ENCODE measurements at regions of chr18 and their contacts with region 1.

Region 1: DNA sequence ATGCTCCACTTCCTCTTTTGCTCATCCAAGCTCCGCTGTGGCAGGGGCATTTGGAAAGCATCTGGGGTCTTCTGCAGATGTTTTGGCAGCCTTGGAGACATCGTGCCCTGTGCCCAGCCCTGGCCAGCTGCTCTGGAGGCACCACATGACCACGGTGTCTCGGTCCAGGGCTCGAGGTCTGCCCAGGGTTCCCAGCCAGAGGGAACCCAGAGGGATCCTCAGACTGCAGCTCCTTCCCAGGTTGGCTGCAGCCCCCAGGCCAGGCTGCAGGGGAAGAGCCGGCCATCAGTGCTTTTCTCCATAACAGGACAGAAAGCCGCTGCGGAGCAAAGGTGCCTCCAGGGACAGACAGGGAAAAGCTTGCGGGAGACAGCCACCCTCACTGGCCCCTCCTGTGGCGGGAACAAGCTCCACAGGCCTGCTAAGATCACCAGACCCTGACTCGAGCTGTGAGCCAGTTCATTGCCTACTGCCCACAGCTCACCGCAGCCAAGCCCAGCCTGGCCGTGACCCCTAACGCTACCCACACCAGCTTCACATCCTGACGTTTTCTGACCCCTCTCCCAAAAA is 74.7 kb downstream of the SMAD7 start:
- DNase-seq: no peak
- H3K4me3 ChIP-seq: no peak overlapping the region
- H3K27ac ChIP-seq: no peak overlapping the region
- H3K4me1 ChIP-seq: peaks cover 13% of the 10 kb centered on the region
- H3K27me3 ChIP-seq: no peaks in the 10 kb centered on the region
- CTCF ChIP-seq: no peak

Region 2: DNA sequence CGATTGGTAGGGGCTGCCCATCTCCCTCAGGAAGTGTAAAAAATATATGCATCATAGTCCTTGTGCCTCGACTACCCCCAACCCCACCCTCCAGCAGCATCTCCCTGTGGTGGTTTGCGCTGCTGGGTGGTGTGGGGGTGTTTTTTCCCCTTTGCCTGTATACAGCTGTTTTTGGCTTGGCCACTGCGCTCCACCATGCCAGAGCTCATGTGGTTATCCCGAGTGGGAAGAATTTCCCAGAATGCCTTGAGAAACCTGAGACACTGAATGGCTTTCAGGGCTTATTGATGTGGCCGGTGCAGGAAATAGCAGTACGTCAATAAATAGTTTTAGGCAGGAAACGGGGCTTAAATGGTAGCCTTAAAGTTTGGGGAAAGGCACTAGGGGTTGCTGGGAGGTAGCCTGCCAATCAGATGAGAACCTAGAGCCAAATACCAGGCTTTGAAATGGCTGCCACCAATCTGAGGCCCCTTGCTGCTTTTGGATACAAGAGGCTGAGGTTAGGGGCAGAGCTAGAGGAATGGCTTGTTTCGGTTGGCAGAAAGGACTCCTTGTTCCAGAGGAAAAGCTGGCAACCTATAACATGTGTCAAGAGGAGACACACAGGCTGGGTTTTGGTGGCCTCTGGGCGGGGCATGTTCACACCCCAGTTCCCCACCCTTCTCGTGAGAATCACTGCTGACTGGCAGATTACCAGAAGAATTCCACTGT is 69.3 kb before region 1 on chr18:
- CTCF ChIA-PET with region 1: no interaction called
- dilution Hi-C with region 1: no loop called
- in situ Hi-C with region 1: no loop called
- intact Hi-C with region 1: no loop called
- DNase-seq: no peak
- H3K4me3 ChIP-seq: no peak overlapping the region
- H3K27ac ChIP-seq: no peak overlapping the region
- H3K4me1 ChIP-seq: peaks cover 6% of the 10 kb centered on the region
- H3K27me3 ChIP-seq: no peaks in the 10 kb centered on the region
- CTCF ChIP-seq: no peak

Region 3: DNA sequence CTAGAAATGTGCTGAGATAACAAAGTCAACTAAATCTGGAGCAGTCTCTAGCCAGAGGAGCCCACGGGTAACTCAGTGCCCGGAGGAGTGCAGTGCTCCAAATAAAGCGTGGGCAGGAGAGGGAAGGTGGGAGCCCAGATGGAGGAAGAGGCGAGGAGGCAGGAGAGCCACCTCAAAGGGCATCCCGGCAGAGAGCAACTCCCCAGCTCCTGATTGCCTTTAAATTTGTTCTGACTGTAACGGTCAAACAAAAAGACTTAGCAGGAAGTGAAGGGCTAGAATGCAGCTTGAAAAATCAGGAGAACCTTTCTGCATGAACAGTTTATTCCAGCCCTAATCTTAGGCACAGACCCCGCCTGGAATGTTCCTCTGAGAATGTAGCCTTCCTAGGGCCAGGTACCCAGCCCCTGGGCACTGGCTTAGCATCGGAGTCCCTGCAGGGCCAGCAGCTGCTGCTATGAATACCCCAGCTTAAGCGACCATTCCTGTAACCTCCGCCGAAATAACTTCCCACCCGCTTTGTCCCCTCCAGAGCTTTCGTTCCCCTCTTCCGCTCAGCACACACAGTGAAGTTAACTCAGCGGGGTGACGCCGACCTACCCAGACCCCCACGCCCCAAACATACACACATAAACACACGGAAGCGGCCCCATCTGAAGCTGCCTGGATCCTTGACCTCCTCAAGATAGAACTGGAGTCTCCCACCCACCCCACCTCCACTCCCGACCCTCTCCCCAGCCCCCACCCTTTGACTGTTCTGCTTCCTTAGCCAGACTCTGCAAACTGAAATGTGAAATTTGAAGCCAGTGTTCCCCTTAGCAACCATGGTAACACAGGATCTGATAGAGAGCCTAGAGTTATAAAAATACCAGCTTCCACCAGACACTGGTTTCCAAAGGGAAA is 48.5 kb before region 1 on chr18:
- CTCF ChIA-PET with region 1: no interaction called
- dilution Hi-C with region 1: loop called (anchors 5 kb)
- in situ Hi-C with region 1: no loop called
- intact Hi-C with region 1: no loop called
- DNase-seq: no peak
- H3K4me3 ChIP-seq: no peak overlapping the region
- H3K27ac ChIP-seq: no peak overlapping the region
- H3K4me1 ChIP-seq: peaks cover 17% of the 10 kb centered on the region
- H3K27me3 ChIP-seq: no peaks in the 10 kb centered on the region
- CTCF ChIP-seq: no peak

Region 4: DNA sequence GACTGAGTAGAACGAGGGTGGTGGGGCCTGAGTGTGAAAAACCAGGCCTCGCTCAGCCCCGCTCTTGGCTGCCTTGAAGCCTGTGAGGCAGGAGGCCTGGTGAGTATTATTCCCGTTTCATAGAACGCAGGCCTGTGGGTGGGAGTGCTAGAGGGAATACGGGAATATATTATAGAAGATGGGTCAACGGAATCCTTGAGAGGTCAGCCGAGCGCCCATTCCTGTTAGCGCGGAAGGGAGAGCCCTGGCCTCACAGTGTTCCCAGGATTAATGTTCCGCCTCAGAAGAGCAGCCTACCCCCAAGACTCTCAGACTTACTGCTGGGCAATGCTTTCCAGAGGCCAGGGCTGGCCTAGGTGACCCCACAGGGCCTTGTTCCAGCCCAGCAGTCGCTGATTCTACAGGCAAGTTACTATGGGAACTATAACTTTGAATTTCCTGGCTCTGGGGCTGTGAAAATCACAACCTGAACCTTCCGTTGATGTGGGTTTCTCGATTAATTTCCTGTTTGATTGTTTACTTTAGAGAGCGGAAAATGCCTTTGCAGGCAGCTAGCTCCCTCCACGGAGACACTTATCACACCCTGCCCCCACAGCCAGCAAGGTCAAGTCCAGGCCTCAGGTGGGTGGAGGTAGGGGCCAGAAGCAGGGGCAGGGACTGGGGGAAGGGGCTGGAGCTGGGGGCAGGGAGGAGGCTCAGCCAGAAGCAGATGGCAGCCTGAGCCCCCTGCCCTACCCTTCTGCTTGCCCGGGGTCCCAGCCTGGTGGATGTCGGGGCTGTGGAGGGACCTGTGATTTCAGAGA is 33.6 kb before region 1 on chr18:
- CTCF ChIA-PET with region 1: no interaction called
- dilution Hi-C with region 1: no loop called
- in situ Hi-C with region 1: no loop called
- intact Hi-C with region 1: no loop called
- DNase-seq: no peak
- H3K4me3 ChIP-seq: no peak overlapping the region
- H3K27ac ChIP-seq: no peak overlapping the region
- H3K4me1 ChIP-seq: peaks cover 36% of the 10 kb centered on the region
- H3K27me3 ChIP-seq: no peaks in the 10 kb centered on the region
- CTCF ChIP-seq: no peak

Region 5: DNA sequence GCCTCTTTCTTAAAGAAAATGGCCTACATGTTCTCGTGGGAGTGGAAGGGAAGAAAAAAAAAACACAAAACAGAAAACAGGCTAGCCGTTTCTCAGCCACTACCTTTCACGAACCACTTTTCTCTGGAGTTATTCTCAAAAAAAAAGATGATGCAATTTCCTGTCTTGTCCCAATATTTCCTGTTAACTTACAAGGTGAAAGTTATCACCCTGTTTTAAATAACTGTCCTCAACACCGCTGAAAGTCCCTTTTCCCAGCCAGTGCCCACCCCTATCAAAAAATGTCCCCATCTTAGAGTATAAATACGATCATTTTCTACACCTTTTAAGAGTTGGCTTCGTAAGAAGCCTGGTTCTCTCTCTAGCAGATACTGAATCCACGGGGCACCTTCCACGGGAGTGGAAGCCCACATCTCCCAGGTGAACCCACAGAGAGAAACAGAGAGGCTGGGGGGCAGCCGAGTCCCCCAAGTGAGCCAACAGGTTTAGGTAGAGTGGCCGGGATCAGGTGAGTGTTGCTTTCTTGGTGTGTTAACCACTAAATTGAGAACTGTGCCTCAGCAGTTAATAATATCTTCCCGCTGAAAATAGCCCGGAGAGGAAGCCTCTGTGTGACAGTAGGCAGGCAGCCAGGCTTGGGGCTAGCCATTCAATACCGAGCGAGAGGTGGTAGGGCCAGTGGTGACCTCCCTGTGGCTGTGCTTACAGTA is 58.9 kb after region 1 on chr18:
- CTCF ChIA-PET with region 1: no interaction called
- dilution Hi-C with region 1: no loop called
- in situ Hi-C with region 1: no loop called
- intact Hi-C with region 1: loop called (anchors 5 kb)
- DNase-seq: no peak
- H3K4me3 ChIP-seq: no peak overlapping the region
- H3K27ac ChIP-seq: peak overlapping the region; percentile 71
- H3K4me1 ChIP-seq: peaks cover 78% of the 10 kb centered on the region
- H3K27me3 ChIP-seq: no peaks in the 10 kb centered on the region
- CTCF ChIP-seq: no peak

Region 6: GRCh38 chr18:48968412-48969215 is 92.6 kb after region 1 on chr18:
- CTCF ChIA-PET with region 1: no interaction called
- dilution Hi-C with region 1: loop called (anchors 5 kb)
- in situ Hi-C with region 1: no loop called
- intact Hi-C with region 1: no loop called
- DNase-seq: no peak
- H3K4me3 ChIP-seq: no peak overlapping the region
- H3K27ac ChIP-seq: no peak overlapping the region
- H3K4me1 ChIP-seq: no peaks in the 10 kb centered on the region
- H3K27me3 ChIP-seq: no peaks in the 10 kb centered on the region
- CTCF ChIP-seq: no peak

Measured in mammary epithelial cell (primary cell).